Right lobe of liver (tissue), 6 donors: ENCODE measurements at regions of chr5 and their contacts with region 1.

Region 1: DNA sequence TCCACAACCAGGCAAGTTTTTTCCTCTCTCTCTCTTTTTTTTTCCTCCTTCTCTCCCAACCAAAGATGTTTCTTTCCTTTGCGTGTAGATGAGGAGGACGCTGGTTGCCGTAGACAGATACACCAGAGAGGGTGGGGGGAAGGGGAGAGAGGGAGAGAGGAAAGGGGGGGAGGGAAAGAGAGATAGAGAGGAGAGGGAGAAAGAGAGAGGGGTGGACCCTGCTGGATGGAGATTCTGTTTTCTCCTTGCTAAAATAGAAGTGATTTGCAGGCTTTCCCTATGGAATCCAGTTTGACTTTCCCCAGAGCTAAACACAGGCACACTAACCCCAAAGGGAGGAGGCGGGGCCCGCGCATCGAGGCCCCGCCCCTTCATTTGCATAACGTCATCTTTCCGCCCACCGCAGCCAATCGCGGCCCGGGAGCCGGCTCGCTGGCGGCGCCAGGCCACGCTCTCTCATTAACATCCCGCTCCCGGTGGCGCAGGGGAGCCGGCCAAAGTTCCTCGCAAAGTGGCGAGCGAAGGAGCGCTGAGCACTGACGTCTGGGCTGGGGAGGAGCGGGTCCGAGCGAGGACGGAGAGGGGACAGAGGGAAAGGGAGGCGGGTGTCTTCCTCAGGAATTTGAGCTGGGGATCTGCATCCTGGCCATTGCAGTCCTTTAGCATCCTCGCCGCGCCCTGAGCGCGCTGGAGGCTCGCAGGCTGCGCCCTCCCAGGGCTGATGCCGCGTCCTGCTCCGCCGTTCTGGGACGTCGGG is 487 bp upstream of the EBF1 start:
- DNase-seq: peak; percentile 85 to 88 (median 87)
- ATAC-seq: peak; percentile 87 to 93 (median 92)
- H3K4me3 ChIP-seq: peak overlapping the region; percentile 12 to 43 (median 23)
- H3K27ac ChIP-seq: no peak overlapping the region
- H3K4me1 ChIP-seq: peaks cover 0 to 28% (median 0%) of the 10 kb centered on the region in 4 donors
- H3K27me3 ChIP-seq: peaks cover 0 to 58% of the 10 kb centered on the region in 2 donors
- CTCF ChIP-seq: no peak
- POLR2A ChIP-seq: peak; percentile 11

Region 2: GRCh38 chr5:158695595-158696330 is 404.4 kb before region 1 on chr5:
- intact Hi-C with region 1: loop called (anchors 5 to 10 kb)
- DNase-seq: peak; percentile 62 to 79 (median 78)
- ATAC-seq: peak; percentile 94 to 97 (median 96)
- H3K4me3 ChIP-seq: no peak overlapping the region
- H3K27ac ChIP-seq: no peak overlapping the region
- H3K4me1 ChIP-seq: peaks cover 0 to 16% (median 0%) of the 10 kb centered on the region in 4 donors
- H3K27me3 ChIP-seq: no peaks in the 10 kb centered on the region
- CTCF ChIP-seq: peak; percentile 95 to 97 (median 96)
- POLR2A ChIP-seq: no peak